CD8-positive, alpha-beta memory T cell (primary cell): ENCODE measurements at regions of chr3 and their contacts with region 1.

Region 1: DNA sequence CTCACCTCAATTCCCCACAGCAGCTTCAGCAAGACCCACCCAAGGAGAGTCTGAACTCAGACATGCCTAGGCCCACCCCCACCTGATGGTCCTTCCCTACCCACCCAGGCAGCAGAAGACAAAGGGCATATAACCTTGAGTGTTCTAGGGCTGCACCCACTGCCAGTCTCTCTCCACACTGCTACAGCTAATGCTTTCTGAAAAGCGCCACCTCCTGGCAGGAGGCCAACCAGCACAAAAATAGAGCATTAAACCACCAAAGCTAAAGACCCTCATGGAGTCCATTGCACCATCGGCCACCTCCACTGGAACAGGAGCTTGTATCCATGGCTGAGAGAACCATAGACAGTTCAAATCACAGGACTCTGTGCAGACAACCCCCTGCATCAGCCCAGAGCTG is 11.3 kb upstream of the RPL39L start:
- DNase-seq: peak; percentile 47 to 79 (median 56)
- H3K4me3 ChIP-seq: no peak overlapping the region
- H3K4me3 Mint-ChIP-seq: no peak overlapping the region
- H3K27ac ChIP-seq: no peak overlapping the region
- H3K27ac Mint-ChIP-seq: peak overlapping the region in 1 of 8 donors; percentile 54
- H3K4me1 ChIP-seq: no peaks in the 10 kb centered on the region
- H3K4me1 Mint-ChIP-seq: peaks cover 0 to 5% (median 4%) of the 10 kb centered on the region in 3 donors
- H3K27me3 ChIP-seq: no peaks in the 10 kb centered on the region
- H3K27me3 Mint-ChIP-seq: peaks cover 19 to 27% of the 10 kb centered on the region in 2 donors

Region 2: GRCh38 chr3:187120326-187120725 is 30.3 kb before region 1 on chr3:
- CTCF ChIA-PET with region 1: interaction called, 81 read pairs
- POLR2A ChIA-PET with region 1: no interaction called
- DNase-seq: no peak
- H3K4me3 ChIP-seq: no peak overlapping the region
- H3K4me3 Mint-ChIP-seq: no peak overlapping the region
- H3K27ac ChIP-seq: no peak overlapping the region
- H3K27ac Mint-ChIP-seq: no peak overlapping the region
- H3K4me1 ChIP-seq: no peaks in the 10 kb centered on the region
- H3K4me1 Mint-ChIP-seq: no peaks in the 10 kb centered on the region
- H3K27me3 ChIP-seq: no peaks in the 10 kb centered on the region
- H3K27me3 Mint-ChIP-seq: no peaks in the 10 kb centered on the region

Region 3: GRCh38 chr3:187172929-187173328 is 22.3 kb after region 1 on chr3:
- CTCF ChIA-PET with region 1: no interaction called
- POLR2A ChIA-PET with region 1: no interaction called
- DNase-seq: no peak
- H3K4me3 ChIP-seq: no peak overlapping the region
- H3K4me3 Mint-ChIP-seq: no peak overlapping the region
- H3K27ac ChIP-seq: no peak overlapping the region
- H3K27ac Mint-ChIP-seq: no peak overlapping the region
- H3K4me1 ChIP-seq: peaks cover 4% of the 10 kb centered on the region
- H3K4me1 Mint-ChIP-seq: peaks cover 0 to 4% (median 0%) of the 10 kb centered on the region in 3 donors
- H3K27me3 ChIP-seq: peaks cover 3% of the 10 kb centered on the region
- H3K27me3 Mint-ChIP-seq: peaks cover 4 to 20% of the 10 kb centered on the region in 2 donors

Region 4: GRCh38 chr3:187186801-187187421 is 36.3 kb after region 1 on chr3:
- CTCF ChIA-PET with region 1: no interaction called
- POLR2A ChIA-PET with region 1: no interaction called
- DNase-seq: no peak
- H3K4me3 ChIP-seq: no peak overlapping the region
- H3K4me3 Mint-ChIP-seq: no peak overlapping the region
- H3K27ac ChIP-seq: no peak overlapping the region
- H3K27ac Mint-ChIP-seq: no peak overlapping the region
- H3K4me1 ChIP-seq: no peaks in the 10 kb centered on the region
- H3K4me1 Mint-ChIP-seq: peaks cover 0 to 4% (median 3%) of the 10 kb centered on the region in 3 donors
- H3K27me3 ChIP-seq: no peaks in the 10 kb centered on the region
- H3K27me3 Mint-ChIP-seq: peaks cover 18 to 59% of the 10 kb centered on the region in 2 donors